ENCODE measurements at regions of chr15 and their contacts with region 1.

Region 1: GRCh38 chr15:99704444-99704838 is 28.8 kb downstream of the LYSMD4 start:
- DNase-seq: peak; percentile 87
- ATAC-seq: peak; percentile 80
- H3K4me3 ChIP-seq: no peak overlapping the region
- H3K4me3 Mint-ChIP-seq: no peak overlapping the region
- H3K27ac ChIP-seq: peak overlapping the region in 1 of 2 donors; percentile 91
- H3K27ac Mint-ChIP-seq: no peak overlapping the region
- H3K4me1 ChIP-seq: peaks cover 15 to 18% of the 10 kb centered on the region in 2 donors
- H3K4me1 Mint-ChIP-seq: peaks cover 28% of the 10 kb centered on the region
- H3K27me3 ChIP-seq: no peaks in the 10 kb centered on the region
- H3K27me3 Mint-ChIP-seq: no peaks in the 10 kb centered on the region
- CTCF ChIP-seq: peak; percentile 76

Region 2: GRCh38 chr15:99104788-99105513 is 599.5 kb before region 1 on chr15 and contains the start of gene SYNM:
- CTCF ChIA-PET with region 1: interaction called, 3 read pairs
- POLR2A ChIA-PET with region 1: no interaction called
- intact Hi-C with region 1: loop called (anchors 5 kb)
- DNase-seq: peak; percentile 55
- ATAC-seq: peak; percentile 73
- H3K4me3 ChIP-seq: peak within 1 kb of the TSS in 2 of 5 experiments; percentile 36 to 40
- H3K4me3 Mint-ChIP-seq: peak within 1 kb of the TSS; percentile 70
- H3K27ac ChIP-seq: no peak within 1 kb of the TSS
- H3K27ac Mint-ChIP-seq: no peak within 1 kb of the TSS
- H3K4me1 ChIP-seq: peaks cover 12 to 14% of the 10 kb centered on the region in 2 donors
- H3K4me1 Mint-ChIP-seq: peaks cover 18% of the 10 kb centered on the region
- H3K27me3 ChIP-seq: peaks cover 0 to 44% (median 22%) of the 10 kb centered on the region in 4 experiments
- H3K27me3 Mint-ChIP-seq: peaks cover 50% of the 10 kb centered on the region
- CTCF ChIP-seq: peak; percentile 48
- total RNA-seq, gene SYNM: 0.27 and 0.36 TPM in 2 replicates

Region 3: GRCh38 chr15:99303907-99304306 is 400.5 kb before region 1 on chr15:
- CTCF ChIA-PET with region 1: interaction called, 10 read pairs
- POLR2A ChIA-PET with region 1: no interaction called
- intact Hi-C with region 1: no loop called
- DNase-seq: no peak
- ATAC-seq: no peak
- H3K4me3 ChIP-seq: no peak overlapping the region
- H3K4me3 Mint-ChIP-seq: no peak overlapping the region
- H3K27ac ChIP-seq: no peak overlapping the region
- H3K27ac Mint-ChIP-seq: no peak overlapping the region
- H3K4me1 ChIP-seq: no peaks in the 10 kb centered on the region
- H3K4me1 Mint-ChIP-seq: no peaks in the 10 kb centered on the region
- H3K27me3 ChIP-seq: no peaks in the 10 kb centered on the region
- H3K27me3 Mint-ChIP-seq: no peaks in the 10 kb centered on the region
- CTCF ChIP-seq: no peak

Region 4: DNA sequence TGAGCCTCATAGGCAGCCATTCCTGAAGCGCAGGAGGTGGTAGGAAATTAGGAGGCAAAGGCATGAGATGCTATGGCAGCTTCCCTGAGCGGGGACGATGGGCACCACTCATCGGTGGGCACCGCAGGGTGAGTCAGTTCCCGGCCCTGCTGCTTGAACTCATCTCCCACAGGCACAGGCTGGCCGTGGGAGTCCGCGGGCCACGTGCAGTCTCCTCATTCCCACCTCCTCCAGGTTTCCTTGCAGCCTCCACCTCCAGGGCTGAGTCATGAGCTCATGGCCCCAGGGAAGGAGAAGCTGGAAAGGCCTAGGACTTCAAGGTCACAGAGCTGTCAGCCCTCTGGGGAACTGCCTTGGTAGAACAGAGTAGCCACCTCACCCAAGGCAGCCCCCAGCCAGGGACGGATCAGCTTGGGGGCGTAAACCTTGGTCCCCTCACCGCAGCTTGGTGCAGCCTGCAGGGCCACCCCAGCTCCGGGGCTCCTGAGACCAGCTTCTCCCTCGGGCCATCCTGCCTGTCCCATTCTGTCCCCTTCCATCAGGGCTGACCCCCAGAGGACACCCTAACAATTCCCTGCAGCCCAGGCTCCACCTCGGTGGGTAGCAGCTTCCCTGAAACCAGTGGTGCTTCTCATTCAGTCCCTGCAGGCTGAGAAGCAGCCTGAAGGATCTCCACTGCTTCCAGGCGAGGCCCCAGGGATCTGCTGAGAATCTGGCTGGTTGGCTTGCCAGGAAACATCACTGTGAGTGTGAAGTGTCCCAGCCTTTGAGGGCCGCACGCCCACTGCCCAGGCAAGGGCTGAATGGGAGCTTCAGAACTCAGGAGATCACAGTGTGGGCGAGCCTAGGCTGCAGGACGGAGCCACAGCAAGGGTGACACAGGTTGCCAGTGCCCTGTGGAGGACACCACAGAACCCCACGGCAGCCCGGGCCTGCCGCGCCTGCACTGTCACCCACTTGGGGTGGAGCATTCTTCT is 289.4 kb before region 1 on chr15:
- CTCF ChIA-PET with region 1: interaction called, 44 read pairs
- POLR2A ChIA-PET with region 1: no interaction called
- intact Hi-C with region 1: no loop called
- DNase-seq: no peak
- ATAC-seq: no peak
- H3K4me3 ChIP-seq: no peak overlapping the region
- H3K4me3 Mint-ChIP-seq: no peak overlapping the region
- H3K27ac ChIP-seq: no peak overlapping the region
- H3K27ac Mint-ChIP-seq: no peak overlapping the region
- H3K4me1 ChIP-seq: no peaks in the 10 kb centered on the region
- H3K4me1 Mint-ChIP-seq: no peaks in the 10 kb centered on the region
- H3K27me3 ChIP-seq: no peaks in the 10 kb centered on the region
- H3K27me3 Mint-ChIP-seq: no peaks in the 10 kb centered on the region
- CTCF ChIP-seq: no peak

Region 5: GRCh38 chr15:99613887-99614647 is 90.4 kb before region 1 on chr15:
- CTCF ChIA-PET with region 1: interaction called, 11 read pairs
- POLR2A ChIA-PET with region 1: no interaction called
- intact Hi-C with region 1: no loop called
- DNase-seq: no peak
- ATAC-seq: peak; percentile 37
- H3K4me3 ChIP-seq: no peak overlapping the region
- H3K4me3 Mint-ChIP-seq: peak overlapping the region; percentile 38
- H3K27ac ChIP-seq: peak overlapping the region; percentile 52 to 83
- H3K27ac Mint-ChIP-seq: peak overlapping the region; percentile 34
- H3K4me1 ChIP-seq: peaks cover 30 to 41% of the 10 kb centered on the region in 2 donors
- H3K4me1 Mint-ChIP-seq: peaks cover 64% of the 10 kb centered on the region
- H3K27me3 ChIP-seq: no peaks in the 10 kb centered on the region
- H3K27me3 Mint-ChIP-seq: no peaks in the 10 kb centered on the region
- CTCF ChIP-seq: no peak

Region 6: GRCh38 chr15:99717161-99718009 is 12.9 kb after region 1 on chr15:
- CTCF ChIA-PET with region 1: interaction called, 49 read pairs
- POLR2A ChIA-PET with region 1: no interaction called
- intact Hi-C with region 1: no loop called
- DNase-seq: no peak
- ATAC-seq: no peak
- H3K4me3 ChIP-seq: no peak overlapping the region
- H3K4me3 Mint-ChIP-seq: no peak overlapping the region
- H3K27ac ChIP-seq: no peak overlapping the region
- H3K27ac Mint-ChIP-seq: peak overlapping the region; percentile 39
- H3K4me1 ChIP-seq: peaks cover 22 to 27% of the 10 kb centered on the region in 2 donors
- H3K4me1 Mint-ChIP-seq: peaks cover 41% of the 10 kb centered on the region
- H3K27me3 ChIP-seq: no peaks in the 10 kb centered on the region
- H3K27me3 Mint-ChIP-seq: no peaks in the 10 kb centered on the region
- CTCF ChIP-seq: no peak

Measured in B cell (primary cell).